Caco-2 (cell line): ENCODE measurements at regions of chr9 and their contacts with region 1.

Region 1: GRCh38 chr9:118108971-118109370 is 404.8 kb downstream of the TLR4 start:
- DNase-seq: no peak
- H3K4me3 ChIP-seq: no peak overlapping the region
- H3K4me3 Mint-ChIP-seq: no peak overlapping the region
- H3K27ac Mint-ChIP-seq: no peak overlapping the region
- H3K4me1 ChIP-seq: no peaks in the 10 kb centered on the region
- H3K4me1 Mint-ChIP-seq: no peaks in the 10 kb centered on the region
- H3K27me3 ChIP-seq: no peaks in the 10 kb centered on the region
- H3K27me3 Mint-ChIP-seq: no peaks in the 10 kb centered on the region
- CTCF ChIP-seq: no peak

Region 2: GRCh38 chr9:118091711-118092500 is 17.1 kb before region 1 on chr9:
- CTCF ChIA-PET with region 1: no interaction called
- POLR2A ChIA-PET with region 1: no interaction called
- intact Hi-C with region 1: loop called (anchors 1 kb)
- DNase-seq: no peak
- H3K4me3 ChIP-seq: no peak overlapping the region
- H3K4me3 Mint-ChIP-seq: no peak overlapping the region
- H3K27ac Mint-ChIP-seq: no peak overlapping the region
- H3K4me1 ChIP-seq: no peaks in the 10 kb centered on the region
- H3K4me1 Mint-ChIP-seq: no peaks in the 10 kb centered on the region
- H3K27me3 ChIP-seq: no peaks in the 10 kb centered on the region
- H3K27me3 Mint-ChIP-seq: no peaks in the 10 kb centered on the region
- CTCF ChIP-seq: no peak